PC-3 (cell line): ENCODE measurements at regions of chr2 and their contacts with region 1.

Region 1: DNA sequence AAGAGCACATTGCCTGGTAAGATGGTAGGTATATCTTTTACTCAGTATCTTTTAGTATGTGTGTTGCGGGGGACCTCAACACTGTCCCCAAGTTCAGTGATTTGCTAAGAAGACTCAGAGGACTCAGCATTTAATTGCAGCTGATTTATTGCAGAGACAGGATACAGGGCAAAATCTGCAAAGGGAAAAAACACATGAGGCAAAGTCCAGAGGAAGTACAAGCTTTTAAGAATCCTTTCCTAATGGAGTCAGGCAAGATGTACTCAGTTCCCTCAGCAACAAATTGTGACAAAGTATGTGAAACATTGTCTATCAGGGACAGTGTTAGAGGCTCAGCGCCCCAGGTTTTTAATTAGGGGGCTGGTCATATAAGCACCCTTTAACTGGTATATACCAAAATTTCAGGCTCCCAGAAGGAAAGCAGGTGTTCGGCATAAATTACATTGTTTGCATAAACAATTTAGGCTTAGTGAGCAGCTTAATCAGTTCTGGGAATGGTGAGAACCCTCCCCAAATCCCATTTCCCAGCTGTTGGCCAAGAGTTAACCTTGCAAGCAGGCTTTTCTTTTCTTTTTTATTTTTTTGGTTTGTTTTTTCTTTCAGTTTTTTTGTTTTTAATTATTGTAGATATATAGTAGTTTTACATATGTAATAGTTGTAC is 41.7 kb downstream of the RAB3GAP1 start:
- DNase-seq: no peak
- ATAC-seq: peak; percentile 8
- H3K4me3 ChIP-seq: no peak overlapping the region
- H3K27ac ChIP-seq: peak overlapping the region; percentile 43
- H3K4me1 ChIP-seq: peaks cover 51% of the 10 kb centered on the region
- H3K27me3 ChIP-seq: no peaks in the 10 kb centered on the region
- CTCF ChIP-seq: no peak

Region 2: DNA sequence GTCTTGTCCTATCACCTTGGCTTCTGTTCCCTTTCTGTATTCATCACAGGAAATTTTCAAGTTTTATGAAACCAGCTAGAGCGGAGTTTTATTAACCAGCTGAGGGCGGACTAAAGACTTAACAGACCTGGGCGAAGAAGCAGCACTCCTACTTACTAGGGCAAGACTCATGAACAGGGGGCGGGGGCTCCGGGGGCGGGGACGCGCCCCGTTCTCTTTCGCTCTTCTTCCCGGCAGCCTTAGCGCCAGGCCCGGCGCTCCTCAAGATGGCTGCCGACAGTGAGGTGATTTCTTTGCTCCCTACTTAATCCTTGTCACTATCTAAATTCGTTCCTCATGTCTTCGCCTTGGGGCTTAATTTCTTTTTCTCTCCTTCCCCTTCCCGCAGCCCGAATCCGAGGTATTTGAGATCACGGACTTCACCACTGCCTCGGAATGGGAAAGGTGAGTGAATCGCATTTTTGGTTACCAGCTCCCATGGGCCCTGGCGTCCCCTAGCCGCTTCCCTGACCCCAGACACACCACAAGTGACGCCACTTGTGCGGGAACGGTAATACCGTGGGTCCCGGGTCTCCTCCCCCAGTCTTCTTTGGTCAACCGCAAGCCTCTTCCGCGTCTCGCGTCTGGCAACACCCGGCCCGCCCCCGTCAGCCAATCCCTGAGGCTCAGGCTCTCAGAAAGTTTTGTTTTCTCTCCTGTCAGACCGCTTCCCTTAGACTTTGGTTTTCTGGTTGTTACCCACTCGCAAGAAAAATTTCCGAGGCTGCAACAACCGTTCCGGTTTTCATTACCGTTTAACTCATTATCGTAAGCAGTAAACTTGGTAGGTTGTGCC is 41.5 kb before region 1 on chr2 and contains the start of gene RAB3GAP1:
- CTCF ChIA-PET with region 1: no interaction called
- POLR2A ChIA-PET with region 1: no interaction called
- intact Hi-C with region 1: loop called (anchors 2 kb)
- DNase-seq: peak; percentile 82
- ATAC-seq: peak; percentile 94
- H3K4me3 ChIP-seq: peak within 1 kb of the TSS; percentile 92
- H3K27ac ChIP-seq: peak within 1 kb of the TSS; percentile 67
- H3K4me1 ChIP-seq: peaks cover 23% of the 10 kb centered on the region
- H3K27me3 ChIP-seq: no peaks in the 10 kb centered on the region
- CTCF ChIP-seq: 0 out of 2 replicates have a peak, but pooled peaks have one; percentile 12
- total RNA-seq, gene RAB3GAP1: 35.8 and 41.1 TPM in 2 replicates

Region 3: DNA sequence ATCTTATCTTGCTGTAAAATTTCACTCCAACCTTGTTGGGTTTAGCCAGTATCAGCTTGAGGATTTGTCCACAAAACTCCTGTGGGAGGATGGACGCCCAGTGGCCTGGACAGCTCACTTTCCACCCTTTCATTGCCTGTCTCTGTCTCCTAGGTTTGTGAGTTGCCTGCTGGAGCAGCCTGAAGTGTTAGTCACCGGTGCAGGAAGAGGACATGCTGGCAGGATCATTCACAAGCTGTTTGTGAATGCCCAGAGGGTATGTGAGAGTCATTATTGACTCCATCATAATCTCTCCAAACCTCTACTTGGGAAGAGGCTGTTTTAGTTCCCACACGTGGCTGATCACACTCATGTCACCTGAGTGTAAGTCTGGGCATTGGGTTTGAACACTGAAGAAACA is 70.6 kb after region 1 on chr2:
- CTCF ChIA-PET with region 1: no interaction called
- POLR2A ChIA-PET with region 1: no interaction called
- intact Hi-C with region 1: loop called (anchors 2 kb)
- DNase-seq: peak; percentile 96
- ATAC-seq: peak; percentile 97
- H3K4me3 ChIP-seq: no peak overlapping the region
- H3K27ac ChIP-seq: peak overlapping the region; percentile 88
- H3K4me1 ChIP-seq: peaks cover 36% of the 10 kb centered on the region
- H3K27me3 ChIP-seq: no peaks in the 10 kb centered on the region
- CTCF ChIP-seq: no peak

Region 4: GRCh38 chr2:136154402-136154783 is 1060.6 kb after region 1 on chr2:
- CTCF ChIA-PET with region 1: no interaction called
- POLR2A ChIA-PET with region 1: no interaction called
- intact Hi-C with region 1: no loop called
- DNase-seq: no peak
- ATAC-seq: no peak
- H3K4me3 ChIP-seq: no peak overlapping the region
- H3K27ac ChIP-seq: no peak overlapping the region
- H3K4me1 ChIP-seq: no peaks in the 10 kb centered on the region
- H3K27me3 ChIP-seq: peaks cover 69% of the 10 kb centered on the region
- CTCF ChIP-seq: no peak